ENCODE measurements at regions of chr7 and their contacts with region 1.

Region 1: DNA sequence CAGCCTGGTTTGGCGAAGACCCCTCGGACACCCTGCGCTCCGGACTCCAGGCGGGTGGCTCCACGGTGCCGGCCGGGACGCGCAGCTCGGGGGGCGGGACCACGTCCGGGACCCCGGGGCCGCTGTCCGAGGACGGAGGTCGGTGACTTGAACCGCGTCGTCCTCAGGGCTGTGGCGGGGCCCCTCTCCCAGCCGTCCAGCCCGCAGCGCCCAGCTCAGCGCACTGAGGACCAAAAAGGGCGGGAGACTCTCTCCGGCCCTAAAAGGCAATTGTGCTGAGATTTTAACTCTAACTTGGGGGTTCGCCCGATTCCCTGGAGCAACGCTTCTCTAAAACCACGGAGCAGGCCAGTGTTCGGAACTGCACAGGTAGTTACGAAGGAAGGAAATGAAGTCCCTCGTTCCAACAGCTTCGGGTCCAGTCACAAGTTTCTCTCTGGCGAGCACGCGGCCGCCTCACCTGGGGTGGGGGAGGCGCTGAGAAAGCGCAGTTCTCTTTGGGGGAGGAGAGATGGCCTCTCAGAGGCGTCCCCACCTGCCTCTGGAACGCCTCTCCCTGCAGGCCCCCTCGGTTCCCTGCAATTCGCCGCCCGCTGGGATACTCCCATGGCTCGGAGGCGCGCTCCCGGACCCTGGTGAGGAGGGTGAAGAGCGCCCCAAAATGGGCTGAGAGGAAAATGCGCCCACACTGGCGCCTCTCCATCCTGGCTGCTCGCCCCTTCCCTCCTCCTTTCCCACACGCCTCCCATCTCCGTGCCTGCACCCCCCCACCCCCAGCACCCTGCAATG is 352.7 kb downstream of the DNAJB6 start:
- DNase-seq: no peak
- H3K4me3 ChIP-seq: no peak overlapping the region
- H3K4me3 Mint-ChIP-seq: peak overlapping the region in 7 of 8 donors; percentile 10 to 81 (median 54)
- H3K27ac ChIP-seq: no peak overlapping the region
- H3K27ac Mint-ChIP-seq: no peak overlapping the region
- H3K4me1 ChIP-seq: peaks cover 33% of the 10 kb centered on the region
- H3K4me1 Mint-ChIP-seq: peaks cover 14 to 30% (median 23%) of the 10 kb centered on the region in 4 donors
- H3K27me3 ChIP-seq: peaks cover 32% of the 10 kb centered on the region
- H3K27me3 Mint-ChIP-seq: peaks cover 36 to 39% of the 10 kb centered on the region in 2 donors

Region 2: GRCh38 chr7:157404845-157405481 is 284.5 kb before region 1 on chr7:
- CTCF ChIA-PET with region 1: no interaction called
- POLR2A ChIA-PET with region 1: no interaction called
- intact Hi-C with region 1: no loop called
- DNase-seq: no peak
- H3K4me3 ChIP-seq: no peak overlapping the region
- H3K4me3 Mint-ChIP-seq: no peak overlapping the region
- H3K27ac ChIP-seq: no peak overlapping the region
- H3K27ac Mint-ChIP-seq: peak overlapping the region in 3 of 7 donors; percentile 63 to 85 (median 74)
- H3K4me1 ChIP-seq: peaks cover 17% of the 10 kb centered on the region
- H3K4me1 Mint-ChIP-seq: peaks cover 9 to 14% (median 12%) of the 10 kb centered on the region in 4 donors
- H3K27me3 ChIP-seq: no peaks in the 10 kb centered on the region
- H3K27me3 Mint-ChIP-seq: no peaks in the 10 kb centered on the region

Region 3: DNA sequence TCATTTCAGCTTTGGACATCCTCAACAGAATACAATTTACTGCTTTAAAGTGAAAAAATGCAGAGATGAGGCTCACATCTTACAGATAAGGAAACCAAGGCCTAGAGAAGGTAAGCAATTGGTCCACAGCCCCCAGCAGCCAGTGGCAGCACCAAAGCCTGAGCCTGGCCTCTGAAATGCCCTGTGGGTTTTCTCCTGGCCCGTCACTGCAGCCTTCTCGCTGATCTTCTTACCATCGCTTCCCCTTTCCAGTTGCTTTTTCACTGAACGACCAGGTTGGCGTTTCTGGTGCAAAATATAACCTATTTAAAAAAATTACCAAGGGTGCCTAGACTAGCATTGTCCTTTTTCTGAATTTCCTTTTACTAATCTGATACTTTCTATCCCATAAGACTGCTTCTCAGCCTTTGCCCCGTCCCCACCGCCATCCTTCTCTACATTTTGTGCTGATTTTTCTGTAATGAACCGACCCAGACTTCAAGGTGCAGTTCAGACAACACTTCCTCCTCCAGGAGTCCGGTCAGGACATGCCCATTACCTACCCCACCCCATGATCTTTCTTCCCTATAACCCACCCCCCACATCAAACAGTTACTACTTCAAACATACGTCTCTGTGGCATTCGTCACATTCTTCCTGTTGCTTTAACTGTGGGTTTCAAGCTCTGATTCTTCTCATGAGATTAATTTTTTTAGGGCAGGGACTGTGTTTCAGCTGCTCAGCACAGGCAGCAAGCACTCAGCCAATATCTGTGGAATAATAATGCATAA is 63.3 kb before region 1 on chr7:
- CTCF ChIA-PET with region 1: no interaction called
- POLR2A ChIA-PET with region 1: interaction called, 6 read pairs
- intact Hi-C with region 1: loop called (anchors 5 kb)
- DNase-seq: peak; percentile 53 to 75 (median 69)
- H3K4me3 ChIP-seq: peak overlapping the region in 1 of 2 donors; percentile 13
- H3K4me3 Mint-ChIP-seq: peak overlapping the region; percentile 60 to 84 (median 81)
- H3K27ac ChIP-seq: no peak overlapping the region
- H3K27ac Mint-ChIP-seq: peak overlapping the region; percentile 7 to 96 (median 91)
- H3K4me1 ChIP-seq: peaks cover 57% of the 10 kb centered on the region
- H3K4me1 Mint-ChIP-seq: peaks cover 33 to 78% (median 61%) of the 10 kb centered on the region in 4 donors
- H3K27me3 ChIP-seq: no peaks in the 10 kb centered on the region
- H3K27me3 Mint-ChIP-seq: peaks cover 2 to 3% of the 10 kb centered on the region in 2 donors

Region 4: DNA sequence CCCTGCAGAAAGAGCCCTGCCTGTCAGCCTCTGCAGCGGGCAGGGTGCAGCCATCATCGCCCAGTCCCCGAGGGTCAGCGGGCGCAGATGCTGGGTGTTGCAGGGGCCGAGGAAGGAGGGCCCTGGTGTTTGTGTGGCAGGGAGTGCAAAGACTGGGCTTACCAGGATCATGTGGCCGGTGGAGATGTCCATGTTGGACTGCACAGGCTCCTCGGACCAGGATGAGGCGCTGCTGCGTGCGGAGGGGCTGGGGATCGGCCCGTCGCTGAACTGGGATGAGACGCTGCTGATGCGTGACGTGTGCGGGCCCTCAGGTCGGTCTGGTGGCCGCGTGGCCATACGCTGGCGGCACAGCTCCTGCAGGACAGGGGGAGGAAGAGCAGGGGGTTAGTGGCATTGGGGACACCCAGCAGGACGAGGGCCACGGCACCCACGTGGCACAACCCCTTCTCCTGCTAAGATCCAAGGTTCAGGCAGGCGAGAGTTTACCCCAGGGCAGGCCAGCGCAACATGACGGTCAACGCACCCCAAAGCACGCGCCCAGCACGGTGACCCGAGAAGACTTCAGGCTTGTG is 33.2 kb before region 1 on chr7:
- CTCF ChIA-PET with region 1: no interaction called
- POLR2A ChIA-PET with region 1: no interaction called
- intact Hi-C with region 1: no loop called
- DNase-seq: no peak
- H3K4me3 ChIP-seq: no peak overlapping the region
- H3K4me3 Mint-ChIP-seq: no peak overlapping the region
- H3K27ac ChIP-seq: no peak overlapping the region
- H3K27ac Mint-ChIP-seq: no peak overlapping the region
- H3K4me1 ChIP-seq: peaks cover 8% of the 10 kb centered on the region
- H3K4me1 Mint-ChIP-seq: peaks cover 9 to 16% (median 10%) of the 10 kb centered on the region in 4 donors
- H3K27me3 ChIP-seq: no peaks in the 10 kb centered on the region
- H3K27me3 Mint-ChIP-seq: no peaks in the 10 kb centered on the region

Region 5: GRCh38 chr7:157905651-157906461 is 216.4 kb after region 1 on chr7:
- CTCF ChIA-PET with region 1: no interaction called
- POLR2A ChIA-PET with region 1: no interaction called
- intact Hi-C with region 1: no loop called
- DNase-seq: no peak
- H3K4me3 ChIP-seq: no peak overlapping the region
- H3K4me3 Mint-ChIP-seq: no peak overlapping the region
- H3K27ac ChIP-seq: no peak overlapping the region
- H3K27ac Mint-ChIP-seq: no peak overlapping the region
- H3K4me1 ChIP-seq: no peaks in the 10 kb centered on the region
- H3K4me1 Mint-ChIP-seq: no peaks in the 10 kb centered on the region
- H3K27me3 ChIP-seq: no peaks in the 10 kb centered on the region
- H3K27me3 Mint-ChIP-seq: peaks cover 0 to 2% of the 10 kb centered on the region in 2 donors